H1 (cell line): ENCODE measurements at regions of chr16 and their contacts with region 1.

Region 1: DNA sequence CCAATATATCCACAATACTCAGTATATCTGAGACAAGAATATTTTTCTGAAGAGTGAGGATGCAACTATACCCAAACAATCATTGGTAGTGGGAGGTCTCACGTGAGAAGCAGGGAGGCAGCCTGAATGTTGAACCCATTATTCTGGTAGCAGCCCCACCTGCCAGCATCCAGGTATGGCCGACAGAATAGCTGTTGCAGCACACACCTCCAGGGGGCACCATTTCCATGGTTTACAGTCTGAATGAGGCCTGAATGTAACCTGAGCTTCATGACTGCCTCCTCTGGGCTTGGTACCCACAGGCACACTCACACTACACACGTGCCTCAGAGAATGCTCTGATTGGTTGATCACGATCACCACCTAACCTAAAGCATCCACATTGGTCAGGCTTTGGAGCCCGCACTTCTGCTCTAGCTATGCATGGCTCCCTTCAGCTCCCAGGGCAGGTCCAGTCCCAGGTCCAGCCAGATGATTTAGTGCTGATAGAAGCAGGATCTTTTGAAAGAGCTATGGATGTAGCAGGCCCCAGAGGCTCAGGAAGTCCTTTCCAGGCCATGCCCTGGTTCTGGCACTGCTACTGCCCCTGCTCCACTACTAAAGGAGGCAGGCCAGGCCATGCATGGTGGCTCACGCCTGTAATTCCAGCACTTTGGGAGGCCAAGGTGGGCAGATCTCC is 11.0 kb upstream of the CBFB start:
- DNase-seq: peak; percentile 78 to 96
- H3K4me3 ChIP-seq: no peak overlapping the region
- H3K27ac ChIP-seq: no peak overlapping the region
- H3K4me1 ChIP-seq: peaks cover 0 to 6% (median 4%) of the 10 kb centered on the region in 4 experiments; a peak in 4 of 7 replicates
- H3K27me3 ChIP-seq: peaks cover 16 to 35% (median 26%) of the 10 kb centered on the region in 4 experiments
- CTCF ChIP-seq: peak; percentile 82 to 99 (median 89)
- EP300 ChIP-seq: no peak
- POLR2A ChIP-seq: no peak
- RAD21 ChIP-seq: peak; percentile 89 to 91

Region 2: GRCh38 chr16:66900721-66901441 is 117.1 kb before region 1 on chr16:
- CTCF ChIA-PET with region 1: no interaction called
- POLR2A ChIA-PET with region 1: no interaction called
- DNase-seq: no peak
- H3K4me3 ChIP-seq: no peak overlapping the region
- H3K27ac ChIP-seq: no peak overlapping the region
- H3K4me1 ChIP-seq: peaks cover 0 to 6% (median 3%) of the 10 kb centered on the region in 4 experiments; a peak in 4 of 7 replicates
- H3K27me3 ChIP-seq: no peaks in the 10 kb centered on the region; a peak in 1 of 7 replicates
- CTCF ChIP-seq: no peak
- EP300 ChIP-seq: no peak
- POLR2A ChIP-seq: no peak
- RAD21 ChIP-seq: no peak

Region 3: GRCh38 chr16:66968847-66969246 is 49.1 kb before region 1 on chr16:
- CTCF ChIA-PET with region 1: interaction called, 89 read pairs
- POLR2A ChIA-PET with region 1: no interaction called
- DNase-seq: no peak
- H3K4me3 ChIP-seq: no peak overlapping the region
- H3K27ac ChIP-seq: no peak overlapping the region
- H3K4me1 ChIP-seq: no peaks in the 10 kb centered on the region
- H3K27me3 ChIP-seq: no peaks in the 10 kb centered on the region
- CTCF ChIP-seq: no peak
- EP300 ChIP-seq: no peak
- POLR2A ChIP-seq: no peak
- RAD21 ChIP-seq: no peak

Region 4: GRCh38 chr16:67006930-67007658 is 10.9 kb before region 1 on chr16:
- CTCF ChIA-PET with region 1: interaction called, 37 read pairs
- POLR2A ChIA-PET with region 1: interaction called, 4 read pairs
- DNase-seq: no peak
- H3K4me3 ChIP-seq: no peak overlapping the region
- H3K27ac ChIP-seq: no peak overlapping the region
- H3K4me1 ChIP-seq: no peaks in the 10 kb centered on the region
- H3K27me3 ChIP-seq: peaks cover 0 to 12% (median 8%) of the 10 kb centered on the region in 4 experiments; a peak in 5 of 7 replicates
- CTCF ChIP-seq: no peak
- EP300 ChIP-seq: no peak
- POLR2A ChIP-seq: no peak
- RAD21 ChIP-seq: no peak

Region 5: DNA sequence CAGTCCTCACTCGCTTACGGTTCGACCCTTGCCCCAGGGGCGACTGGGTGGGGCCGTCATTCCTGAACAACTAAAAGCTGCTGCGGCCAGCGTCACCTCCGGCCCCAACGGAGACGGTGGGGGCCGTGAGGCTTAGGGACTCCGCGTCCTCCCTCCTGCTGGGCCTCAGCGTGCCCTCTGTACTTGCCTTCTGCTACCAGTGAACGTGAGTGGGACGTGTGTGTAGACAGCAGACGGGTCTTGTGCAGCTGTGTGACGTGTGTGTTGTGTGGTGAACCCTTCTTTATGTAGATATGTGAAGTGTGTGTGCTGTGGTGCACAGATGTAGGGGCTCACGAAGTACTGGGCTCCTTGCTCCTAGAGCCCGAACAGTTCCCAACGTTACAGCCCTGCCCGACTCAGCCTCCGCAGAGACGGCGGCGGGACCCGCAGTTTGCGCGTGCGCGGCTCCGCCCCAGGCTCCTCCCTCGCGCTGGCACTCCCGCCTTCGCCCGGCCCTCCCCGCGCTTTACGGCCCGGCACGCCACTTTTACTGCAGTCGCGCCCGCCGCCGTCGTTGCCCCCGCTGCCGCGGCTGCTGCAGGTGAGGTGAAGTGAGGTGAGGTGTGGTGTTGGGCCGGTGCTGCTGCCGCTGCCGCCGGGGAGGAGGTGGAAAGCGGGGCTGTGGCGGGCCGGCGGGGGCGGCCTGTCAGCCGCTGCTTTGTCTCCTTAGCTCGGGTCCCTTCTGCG is 91.6 kb after region 1 on chr16 and contains the start of gene PHAF1:
- CTCF ChIA-PET with region 1: interaction called, 164 read pairs
- POLR2A ChIA-PET with region 1: interaction called, 4 read pairs
- DNase-seq: peak; percentile 74 to 99
- H3K4me3 ChIP-seq: peak within 1 kb of the TSS; percentile 85 to 98 (median 90)
- H3K27ac ChIP-seq: no peak within 1 kb of the TSS
- H3K4me1 ChIP-seq: peaks cover 0 to 7% (median 5%) of the 10 kb centered on the region in 4 experiments; a peak in 3 of 7 replicates
- H3K27me3 ChIP-seq: peaks cover 0 to 4% (median 1%) of the 10 kb centered on the region in 4 experiments; a peak in 2 of 7 replicates
- CTCF ChIP-seq: no peak
- EP300 ChIP-seq: peak in 1 of 2 experiments; percentile 39; a peak in 1 of 3 replicates
- POLR2A ChIP-seq: peak in 1 of 2 experiments; percentile 48; a peak in 1 of 3 replicates
- RAD21 ChIP-seq: no peak
- total RNA-seq, gene PHAF1: 18.6 TPM in 2 replicates

Region 6: GRCh38 chr16:67159593-67160406 is 141.9 kb after region 1 on chr16 and contains the starts of genes FBXL8 and TRADD:
- CTCF ChIA-PET with region 1: interaction called, 80 read pairs
- POLR2A ChIA-PET with region 1: no interaction called
- DNase-seq: peak in 1 of 2 experiments; percentile 83
- H3K4me3 ChIP-seq: peak within 1 kb of the TSS; percentile 37 to 61 (median 46)
- H3K27ac ChIP-seq: no peak within 1 kb of the TSS
- H3K4me1 ChIP-seq: peaks cover 0 to 29% (median 20%) of the 10 kb centered on the region in 4 experiments; a peak in 6 of 7 replicates
- H3K27me3 ChIP-seq: peaks cover 93 to 100% (median 98%) of the 10 kb centered on the region in 4 experiments
- CTCF ChIP-seq: peak; percentile 20 to 46 (median 35); a peak in 3 of 4 replicates
- EP300 ChIP-seq: no peak
- POLR2A ChIP-seq: no peak
- RAD21 ChIP-seq: no peak; a peak in 1 of 4 replicates
- total RNA-seq, gene FBXL8: not detected in 2 replicates
- total RNA-seq, gene TRADD: 0.19 and 0.29 TPM in 2 replicates